ENCODE measurements at regions of chr14 and their contacts with region 1.

Region 1: DNA sequence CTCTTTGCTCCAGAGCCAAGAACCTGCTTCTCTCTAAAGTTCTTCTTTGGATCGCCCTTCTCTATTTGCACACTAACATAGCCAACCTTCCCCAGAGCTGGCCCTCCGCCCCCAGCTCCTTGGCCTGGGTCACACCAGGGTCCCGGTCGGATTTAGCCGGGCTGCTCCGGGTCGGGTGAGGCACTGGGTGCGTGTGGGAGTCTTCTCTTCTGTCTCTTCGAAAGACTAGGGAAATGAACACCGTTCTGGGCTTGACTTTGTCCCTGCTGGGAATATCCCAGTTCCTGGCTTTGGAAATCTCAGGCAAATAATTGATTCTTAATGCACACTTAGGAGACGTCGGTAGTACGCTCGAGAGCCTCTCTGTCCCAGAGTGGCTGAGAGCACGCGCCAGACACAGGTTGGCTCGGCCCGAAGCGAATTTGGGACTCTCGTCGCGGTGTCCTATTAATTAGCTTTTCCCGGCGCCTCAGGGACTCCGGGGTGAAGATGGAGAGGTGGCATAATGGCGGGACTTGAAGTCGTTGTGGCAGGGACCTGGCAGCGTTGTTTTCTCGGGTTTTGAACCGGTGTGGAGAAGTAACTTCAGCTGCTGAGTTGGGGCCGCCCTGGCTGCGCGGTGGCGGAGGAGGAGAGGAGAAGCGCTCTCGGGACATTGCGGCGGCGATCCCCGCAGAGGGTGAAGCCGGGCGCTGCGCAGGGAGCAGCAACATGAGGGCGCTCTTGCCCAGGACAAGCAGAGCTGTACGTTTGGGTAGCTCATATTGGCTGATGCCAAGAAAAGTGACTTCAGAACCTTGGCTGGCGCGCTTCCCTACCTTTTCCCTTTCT is 7.5 kb downstream of the FOXG1 start:
- DNase-seq: peak in 9 of 10 donors; percentile 65 to 97 (median 86)

Region 2: GRCh38 chr14:28382460-28383220 is 391.4 kb before region 1 on chr14:
- intact Hi-C with region 1: no loop called
- DNase-seq: no peak

Region 3: DNA sequence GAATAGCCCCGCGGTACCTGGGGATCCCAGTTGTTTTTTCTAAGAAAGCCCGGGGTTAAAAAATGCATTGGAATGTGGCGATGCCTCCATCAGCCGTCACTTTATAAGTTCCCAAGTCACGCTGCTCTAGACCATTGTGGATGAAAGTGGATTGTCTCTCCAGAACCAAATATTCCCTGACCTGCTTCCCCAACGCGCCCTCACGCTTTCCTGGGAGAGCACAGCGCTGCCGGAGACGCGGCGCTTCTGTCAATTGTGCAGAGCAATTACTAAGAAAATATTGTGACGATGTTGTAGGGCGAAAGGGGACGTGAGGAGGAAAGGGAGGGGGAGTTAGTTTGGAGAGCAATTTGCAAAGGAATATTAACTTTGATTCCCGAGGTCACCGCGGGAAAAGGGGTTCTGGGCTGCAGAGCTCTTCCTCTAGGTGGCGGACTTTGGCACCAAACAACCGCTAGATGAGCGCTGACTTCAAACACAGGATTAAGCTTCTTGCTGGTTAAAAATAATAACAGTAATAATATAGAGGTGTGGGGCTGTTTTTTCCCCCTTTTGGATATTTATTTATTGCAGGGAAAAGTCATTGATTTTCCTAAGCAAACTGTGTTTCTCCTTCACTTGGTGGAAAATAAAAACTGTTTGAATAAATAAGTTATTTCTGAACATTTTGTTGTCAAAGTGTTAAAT is 17.0 kb before region 1 on chr14:
- intact Hi-C with region 1: no loop called
- DNase-seq: peak in 4 of 10 donors; percentile 23 to 93 (median 55)

Region 4: GRCh38 chr14:29222671-29223268 is 448.7 kb after region 1 on chr14:
- intact Hi-C with region 1: loop called (anchors 5 kb)
- DNase-seq: peak in 3 of 10 donors; percentile 12 to 70 (median 20)

Region 5: DNA sequence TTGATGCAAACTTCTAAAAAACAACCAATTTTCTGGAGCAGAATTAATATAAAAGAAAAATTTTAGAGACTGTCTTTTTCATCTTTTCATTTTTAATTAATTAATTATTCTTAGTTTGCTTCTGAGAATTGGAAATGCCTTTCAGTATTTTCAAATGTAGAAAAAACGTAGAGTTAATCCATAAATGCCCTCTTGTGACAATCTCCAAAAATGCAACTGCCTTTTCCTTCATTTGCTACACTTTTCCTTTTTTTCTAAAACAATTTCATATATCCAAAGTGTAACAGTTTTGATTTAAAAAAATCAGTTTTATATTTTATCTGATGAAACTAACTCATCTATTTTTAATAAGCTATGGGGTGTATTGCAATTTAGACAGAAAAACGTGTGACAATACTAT is 744.3 kb after region 1 on chr14:
- intact Hi-C with region 1: loop called (anchors 5 kb)
- DNase-seq: no peak